ENCODE measurements at regions of chr4 and their contacts with region 1.

Region 1: GRCh38 chr4:38832624-38833528 is 23.7 kb downstream of the TLR6 start:
- DNase-seq: no peak
- H3K4me3 ChIP-seq: no peak overlapping the region
- H3K27ac ChIP-seq: no peak overlapping the region
- H3K4me1 ChIP-seq: no peaks in the 10 kb centered on the region
- CTCF ChIP-seq: peak; percentile 54; the same call in 1 of the 2 replicates

Region 2: DNA sequence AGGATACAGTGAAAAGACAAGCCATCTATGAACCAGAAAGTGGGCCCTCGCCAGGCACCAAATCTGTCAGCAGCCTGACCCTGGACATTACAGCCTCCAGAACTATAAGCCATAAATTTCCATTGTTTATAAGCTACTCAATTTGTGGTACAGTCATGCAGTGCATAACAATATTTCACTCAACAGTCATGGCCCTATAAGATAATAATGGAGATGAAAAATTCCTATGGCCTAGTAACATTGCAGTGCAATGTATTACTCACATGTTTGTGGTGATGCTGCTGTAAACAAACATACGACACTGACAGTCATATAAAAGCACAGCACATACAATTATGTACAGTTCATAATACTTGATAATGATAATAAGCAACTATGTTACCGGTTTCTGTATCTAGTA is 11.1 kb before region 1 on chr4:
- CTCF ChIA-PET with region 1: no interaction called
- POLR2A ChIA-PET with region 1: interaction called, 11 read pairs
- intact Hi-C with region 1: no loop called
- DNase-seq: no peak
- H3K4me3 ChIP-seq: no peak overlapping the region
- H3K27ac ChIP-seq: no peak overlapping the region
- H3K4me1 ChIP-seq: peaks cover 6% of the 10 kb centered on the region
- CTCF ChIP-seq: no peak

Region 3: GRCh38 chr4:38902695-38903094 is 69.8 kb after region 1 on chr4:
- CTCF ChIA-PET with region 1: no interaction called
- POLR2A ChIA-PET with region 1: no interaction called
- intact Hi-C with region 1: no loop called
- DNase-seq: peak; percentile 64
- H3K4me3 ChIP-seq: no peak overlapping the region
- H3K27ac ChIP-seq: no peak overlapping the region
- H3K4me1 ChIP-seq: no peaks in the 10 kb centered on the region
- CTCF ChIP-seq: peak; percentile 85

Measured in OCI-LY7 (cell line).